ENCODE measurements at regions of chr12 and their contacts with region 1.

Region 1: GRCh38 chr12:64494998-64495729 is 43.2 kb downstream of the TBK1 start:
- DNase-seq: no peak
- H3K4me3 Mint-ChIP-seq: no peak overlapping the region
- H3K27ac Mint-ChIP-seq: peak overlapping the region; percentile 34
- H3K4me1 Mint-ChIP-seq: peaks cover 8% of the 10 kb centered on the region
- H3K27me3 Mint-ChIP-seq: no peaks in the 10 kb centered on the region

Region 2: GRCh38 chr12:64419696-64420095 is 75.5 kb before region 1 on chr12:
- intact Hi-C with region 1: loop called (anchors 5 kb)
- DNase-seq: no peak
- H3K4me3 Mint-ChIP-seq: no peak overlapping the region
- H3K27ac Mint-ChIP-seq: peak overlapping the region; percentile 63
- H3K4me1 Mint-ChIP-seq: peaks cover 20% of the 10 kb centered on the region
- H3K27me3 Mint-ChIP-seq: no peaks in the 10 kb centered on the region

Region 3: DNA sequence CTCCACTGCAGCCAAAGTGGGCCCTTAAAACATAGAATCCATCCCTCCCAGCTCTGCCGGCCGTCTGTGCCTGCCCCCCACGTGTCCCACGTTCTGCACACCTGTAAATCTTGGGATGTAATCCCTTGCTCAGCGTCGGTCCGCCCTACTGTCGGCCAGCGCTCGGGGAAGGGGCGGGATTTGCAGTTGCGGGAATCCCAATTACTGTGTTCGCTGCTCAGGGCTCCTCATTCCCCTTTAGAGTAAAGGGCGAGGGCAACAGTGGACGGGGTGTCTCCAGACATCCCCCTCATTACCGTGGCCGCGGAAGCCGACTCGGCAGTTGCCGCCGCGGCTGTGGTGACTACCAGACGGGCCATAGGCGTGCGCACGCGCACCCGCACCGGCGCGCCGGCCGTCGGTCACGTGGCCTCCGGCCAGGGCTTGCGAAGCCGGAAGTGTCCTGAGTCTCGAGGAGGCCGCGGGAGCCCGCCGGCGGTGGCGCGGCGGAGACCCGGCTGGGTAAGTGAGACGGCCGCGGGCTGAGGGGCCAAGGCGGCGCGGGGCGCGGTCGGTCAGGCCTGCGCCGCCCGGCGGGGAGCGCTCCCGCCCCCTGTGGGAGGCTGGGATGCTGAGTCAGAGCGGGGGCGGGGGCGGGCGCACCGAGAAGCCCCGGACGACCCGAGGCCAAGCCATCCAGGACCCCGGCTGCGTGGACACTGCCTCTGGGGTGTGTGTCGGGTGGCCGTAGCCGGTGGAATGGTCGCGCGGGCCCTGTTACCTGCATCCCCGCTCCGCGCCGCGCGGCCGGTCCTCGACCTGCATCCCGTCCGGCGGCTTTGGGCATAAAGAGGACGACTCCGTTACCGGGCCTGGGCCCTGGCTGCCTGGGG is 43.2 kb before region 1 on chr12 and contains the start of gene TBK1:
- intact Hi-C with region 1: loop called (anchors 2 kb)
- DNase-seq: peak; percentile 93
- H3K4me3 Mint-ChIP-seq: peak within 1 kb of the TSS; percentile 98
- H3K27ac Mint-ChIP-seq: peak within 1 kb of the TSS; percentile 98
- H3K4me1 Mint-ChIP-seq: peaks cover 36% of the 10 kb centered on the region
- H3K27me3 Mint-ChIP-seq: no peaks in the 10 kb centered on the region
- total RNA-seq, gene TBK1: 32.9 and 34.6 TPM in 2 replicates

Region 4: GRCh38 chr12:64560396-64561304 is 65.5 kb after region 1 on chr12:
- intact Hi-C with region 1: no loop called
- DNase-seq: no peak
- H3K4me3 Mint-ChIP-seq: no peak overlapping the region
- H3K27ac Mint-ChIP-seq: no peak overlapping the region
- H3K4me1 Mint-ChIP-seq: no peaks in the 10 kb centered on the region
- H3K27me3 Mint-ChIP-seq: peaks cover 7% of the 10 kb centered on the region

Measured in activated CD4-positive, alpha-beta T cell treated with anti-CD3 and anti-CD28 coated beads, Interleukin-2, amount 10 ng/mL, durations not matched to agents 24 days and 14 days (primary cell).